ENCODE measurements at regions of chr1 and their contacts with region 1.

Region 1: DNA sequence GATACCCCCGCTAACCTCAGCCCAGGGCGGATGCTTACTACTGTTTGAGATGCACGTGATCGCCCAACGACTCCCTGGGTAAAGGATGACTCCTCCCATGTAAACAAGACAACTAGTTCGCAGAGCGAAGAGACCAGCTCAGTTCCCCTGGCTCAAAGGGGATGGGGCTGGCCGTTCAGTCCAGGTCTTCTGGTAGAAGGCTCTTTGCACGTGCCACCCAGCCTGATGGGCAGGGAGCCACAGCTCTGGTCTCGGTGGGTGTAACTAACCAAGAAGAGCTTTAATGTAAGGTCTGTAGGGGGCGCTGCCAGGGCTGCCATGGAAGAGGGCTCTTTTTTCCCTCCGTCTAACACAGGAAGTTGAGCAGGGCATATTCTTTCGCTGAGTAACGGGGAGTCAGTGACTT is 49.4 kb upstream of the PARP1 start:
- H3K4me3 ChIP-seq: no peak overlapping the region
- H3K27ac ChIP-seq: no peak overlapping the region
- H3K4me1 ChIP-seq: no peaks in the 10 kb centered on the region
- CTCF ChIP-seq: no peak

Region 2: GRCh38 chr1:226407497-226408284 is 49.6 kb before region 1 on chr1 and contains the start of gene PARP1:
- CTCF ChIA-PET with region 1: interaction called, 12 read pairs
- POLR2A ChIA-PET with region 1: no interaction called
- H3K4me3 ChIP-seq: peak within 1 kb of the TSS; percentile 71
- H3K27ac ChIP-seq: peak within 1 kb of the TSS; percentile 95
- H3K4me1 ChIP-seq: peaks cover 23% of the 10 kb centered on the region
- CTCF ChIP-seq: peak; percentile 74

Region 3: GRCh38 chr1:226443439-226443838 is 13.9 kb before region 1 on chr1:
- CTCF ChIA-PET with region 1: interaction called, 33 read pairs
- POLR2A ChIA-PET with region 1: no interaction called
- H3K4me3 ChIP-seq: no peak overlapping the region
- H3K27ac ChIP-seq: no peak overlapping the region
- H3K4me1 ChIP-seq: no peaks in the 10 kb centered on the region
- CTCF ChIP-seq: no peak

Region 4: DNA sequence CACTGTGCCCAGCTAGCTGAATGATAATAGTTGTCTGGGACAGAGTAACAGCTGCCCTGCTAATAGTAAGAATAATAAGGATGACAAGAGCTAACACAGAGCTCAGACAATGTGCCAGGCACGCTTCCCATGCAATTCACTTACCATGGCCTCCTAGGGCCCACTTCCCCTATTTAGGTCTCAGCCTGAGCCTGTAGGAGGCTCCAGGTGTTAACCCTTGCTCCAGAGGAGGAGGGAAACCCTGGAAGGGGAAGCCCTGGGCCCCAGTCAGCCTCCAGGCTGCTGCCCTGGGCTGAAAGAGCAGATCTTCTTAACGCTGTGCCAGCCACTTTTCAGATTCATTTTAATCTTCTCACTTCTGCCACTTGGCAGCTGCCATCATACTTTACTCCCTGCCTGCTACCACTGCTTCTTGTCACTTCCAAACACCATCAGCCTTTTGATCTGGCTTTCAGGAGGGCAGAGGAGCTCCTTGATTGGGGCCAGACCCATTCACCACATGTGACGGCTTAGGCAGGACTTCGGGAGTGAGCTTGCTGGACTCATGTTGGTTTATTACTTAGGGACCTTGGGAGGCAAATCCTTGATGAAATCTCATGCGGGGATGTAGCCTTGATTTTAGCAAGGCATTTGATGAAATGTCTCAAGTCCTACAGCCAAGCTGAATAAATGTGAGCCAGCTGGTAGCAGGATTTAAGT is 17.3 kb after region 1 on chr1:
- CTCF ChIA-PET with region 1: interaction called, 24 read pairs
- POLR2A ChIA-PET with region 1: no interaction called
- H3K4me3 ChIP-seq: no peak overlapping the region
- H3K27ac ChIP-seq: no peak overlapping the region
- H3K4me1 ChIP-seq: peaks cover 3% of the 10 kb centered on the region; the same call in 1 of the 2 replicates
- CTCF ChIP-seq: no peak

Measured in HEK293 (cell line).